ENCODE measurements at regions of chr2 and their contacts with region 1.

Region 1: DNA sequence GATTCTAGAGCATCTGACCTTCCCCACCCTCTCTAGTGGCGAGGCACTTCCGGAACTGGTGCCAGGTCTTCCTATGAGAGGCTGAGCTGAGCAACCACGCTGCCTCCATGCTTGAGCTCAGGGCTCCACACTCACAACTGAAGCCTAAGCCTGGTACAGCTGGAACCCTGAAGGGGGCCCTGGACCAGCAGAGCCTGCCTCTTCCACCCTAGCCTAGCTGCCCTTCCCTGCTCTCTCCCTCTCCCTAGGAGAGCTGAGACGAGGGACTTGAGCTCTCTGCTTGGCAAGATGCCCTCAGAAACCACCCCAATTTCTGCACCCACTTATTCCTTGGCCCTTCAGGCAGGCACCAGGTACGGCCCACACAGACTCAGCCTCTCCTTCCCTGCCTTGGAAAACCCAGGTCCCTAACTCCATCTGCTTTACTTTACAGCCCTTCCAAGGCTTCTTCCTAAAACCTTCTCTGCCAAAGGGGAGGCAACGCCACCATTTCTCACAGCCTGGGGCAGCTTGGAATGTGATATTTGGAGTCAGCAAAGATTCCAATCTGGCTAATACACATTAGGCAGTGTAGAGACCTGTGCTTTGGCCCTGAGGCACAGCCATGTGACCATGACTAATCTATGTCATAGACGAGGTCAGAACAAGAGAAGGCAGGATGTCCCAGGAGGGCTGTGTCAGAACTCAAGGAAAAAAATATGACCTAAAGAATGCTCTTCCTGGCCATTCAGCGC is 18.8 kb downstream of the COX7A2L start:
- DNase-seq: peak; percentile 39
- H3K4me3 Mint-ChIP-seq: no peak overlapping the region
- H3K27ac Mint-ChIP-seq: peak overlapping the region; percentile 77
- H3K4me1 Mint-ChIP-seq: peaks cover 17% of the 10 kb centered on the region
- H3K27me3 Mint-ChIP-seq: no peaks in the 10 kb centered on the region
- CTCF ChIP-seq: no peak

Region 2: GRCh38 chr2:42132966-42133641 is 209.1 kb before region 1 on chr2:
- CTCF ChIA-PET with region 1: no interaction called
- POLR2A ChIA-PET with region 1: no interaction called
- intact Hi-C with region 1: no loop called
- DNase-seq: peak; percentile 93
- H3K4me3 Mint-ChIP-seq: peak overlapping the region; percentile 64
- H3K27ac Mint-ChIP-seq: peak overlapping the region; percentile 0
- H3K4me1 Mint-ChIP-seq: peaks cover 42% of the 10 kb centered on the region
- H3K27me3 Mint-ChIP-seq: no peaks in the 10 kb centered on the region
- CTCF ChIP-seq: no peak

Region 3: DNA sequence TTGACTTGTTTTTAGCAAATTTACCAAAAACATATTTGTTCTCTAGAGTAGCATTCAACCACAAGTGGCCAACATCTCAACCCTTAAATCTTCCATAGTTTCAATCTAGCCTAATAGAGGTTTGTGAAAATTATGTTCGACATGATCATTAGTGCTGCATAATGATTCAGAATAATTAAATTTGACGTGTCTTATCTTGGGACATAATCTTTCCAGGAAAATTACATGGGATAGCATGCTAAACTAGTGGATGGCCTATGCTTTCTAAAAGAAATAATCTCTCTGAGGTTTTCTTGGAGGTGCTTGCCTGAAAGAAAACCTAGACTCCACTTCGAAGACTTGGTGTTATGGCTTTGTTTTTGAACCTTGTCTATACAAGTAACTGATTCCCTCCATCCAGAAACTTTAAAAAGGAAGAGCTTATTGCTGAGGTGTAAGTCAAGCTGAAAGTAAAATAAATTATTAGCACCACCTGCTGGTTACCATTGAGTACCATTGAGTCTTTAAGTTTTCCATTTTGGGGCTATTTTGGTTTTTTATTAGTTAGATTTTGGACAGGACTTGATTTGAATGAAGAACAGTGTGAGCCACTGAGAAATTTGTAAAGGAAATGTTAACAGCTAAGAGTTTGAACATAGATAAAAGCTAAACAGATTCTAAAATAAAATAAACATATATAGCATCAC is 13.9 kb before region 1 on chr2:
- CTCF ChIA-PET with region 1: interaction called, 21 read pairs
- POLR2A ChIA-PET with region 1: interaction called, 8 read pairs
- intact Hi-C with region 1: no loop called
- DNase-seq: peak; percentile 36
- H3K4me3 Mint-ChIP-seq: no peak overlapping the region
- H3K27ac Mint-ChIP-seq: no peak overlapping the region
- H3K4me1 Mint-ChIP-seq: peaks cover 10% of the 10 kb centered on the region
- H3K27me3 Mint-ChIP-seq: no peaks in the 10 kb centered on the region
- CTCF ChIP-seq: peak; percentile 37

Measured in MCF 10A (cell line).